MCF 10A (cell line): ENCODE measurements at regions of chr9 and their contacts with region 1.

Region 1: GRCh38 chr9:114721491-114722079 is 39.6 kb upstream of the TEX48 start:
- DNase-seq: peak; percentile 49
- H3K4me3 Mint-ChIP-seq: peak overlapping the region; percentile 6
- H3K27ac Mint-ChIP-seq: peak overlapping the region; percentile 3
- H3K4me1 Mint-ChIP-seq: peaks cover 36% of the 10 kb centered on the region
- H3K27me3 Mint-ChIP-seq: no peaks in the 10 kb centered on the region
- CTCF ChIP-seq: no peak

Region 2: DNA sequence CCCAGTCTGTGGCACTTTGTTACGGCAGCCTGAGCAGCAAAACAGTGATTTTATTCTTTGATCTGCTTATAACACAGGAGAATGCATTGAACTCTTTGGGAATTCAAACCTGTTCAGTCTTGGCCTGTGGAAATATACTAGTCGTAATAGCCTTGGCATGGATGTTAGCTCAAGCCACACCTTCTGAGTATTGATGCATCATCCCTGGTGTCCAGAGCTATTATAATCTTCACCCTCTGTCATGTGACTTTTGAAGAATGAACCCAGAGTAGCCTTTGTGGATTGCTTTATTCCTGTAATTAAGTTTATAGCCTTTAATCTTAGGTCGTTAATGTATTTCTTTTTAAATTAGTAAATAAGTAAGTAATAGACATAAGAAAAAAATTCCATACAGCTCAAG is 11.3 kb after region 1 on chr9:
- CTCF ChIA-PET with region 1: interaction called, 5 read pairs
- POLR2A ChIA-PET with region 1: interaction called, 10 read pairs
- intact Hi-C with region 1: no loop called
- DNase-seq: peak; percentile 84
- H3K4me3 Mint-ChIP-seq: no peak overlapping the region
- H3K27ac Mint-ChIP-seq: peak overlapping the region; percentile 94
- H3K4me1 Mint-ChIP-seq: peaks cover 20% of the 10 kb centered on the region
- H3K27me3 Mint-ChIP-seq: no peaks in the 10 kb centered on the region
- CTCF ChIP-seq: no peak